ENCODE measurements at regions of chr2 and their contacts with region 1.

Region 1: DNA sequence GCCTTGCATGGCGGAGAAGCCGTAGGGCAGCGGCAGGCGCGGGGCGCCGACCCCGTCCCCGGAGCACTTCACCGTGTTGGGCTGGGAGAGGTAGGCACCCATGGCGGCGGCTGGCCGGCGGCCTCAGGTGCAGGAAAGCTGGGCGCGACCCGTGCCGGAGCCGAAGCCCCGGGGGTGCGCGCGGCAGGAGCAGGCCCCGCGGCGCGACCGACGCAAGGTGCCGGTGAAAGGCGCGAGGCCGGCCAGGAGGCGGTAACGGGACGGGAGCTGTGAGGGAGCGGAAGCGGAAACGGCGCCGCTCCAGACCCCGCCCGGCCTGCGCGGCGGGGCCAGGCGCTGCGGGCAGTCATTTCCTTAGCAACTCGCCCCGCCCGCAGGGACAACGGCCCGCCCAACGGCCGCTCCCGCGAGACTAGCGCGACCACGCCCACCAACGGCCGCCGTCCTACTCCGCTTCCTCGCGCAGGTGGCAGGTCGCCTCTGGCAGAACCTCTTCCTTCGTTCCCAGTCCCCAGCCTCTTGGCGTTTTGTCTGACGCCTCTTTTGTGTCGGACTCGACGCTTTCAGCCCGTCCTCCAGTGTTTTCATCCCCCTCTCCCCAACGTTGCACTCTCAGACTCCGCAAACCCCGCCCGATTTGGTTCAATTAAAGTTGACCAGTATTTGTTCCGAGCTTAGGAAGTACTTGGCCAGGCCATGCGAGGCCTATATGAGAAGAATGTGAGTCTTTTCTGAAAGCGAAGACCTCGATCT is at the start of gene PPM1G:
- DNase-seq: peak; percentile 96 to 99
- ATAC-seq: peak; percentile 99
- H3K4me3 ChIP-seq: peak within 1 kb of the TSS; percentile 48 to 86
- H3K27ac ChIP-seq: peak within 1 kb of the TSS in 1 of 2 donors; percentile 36
- H3K4me1 ChIP-seq: peaks cover 0 to 3% of the 10 kb centered on the region in 2 donors
- H3K27me3 ChIP-seq: no peaks in the 10 kb centered on the region
- total RNA-seq, gene PPM1G: 39.5 to 42.7 TPM

Region 2: GRCh38 chr2:27370026-27370815 is 39.3 kb before region 1 on chr2 and contains the starts of genes EIF2B4 and SNX17:
- intact Hi-C with region 1: loop called in 1 of 2 experiments (anchors 5 kb)
- DNase-seq: peak; percentile 100
- ATAC-seq: peak; percentile 99
- H3K4me3 ChIP-seq: peak within 1 kb of the TSS; percentile 69 to 82
- H3K27ac ChIP-seq: peak within 1 kb of the TSS in 1 of 2 donors; percentile 90
- H3K4me1 ChIP-seq: no peaks in the 10 kb centered on the region
- H3K27me3 ChIP-seq: no peaks in the 10 kb centered on the region
- total RNA-seq, gene EIF2B4: 32.2 to 42.7 TPM
- total RNA-seq, gene SNX17: 77.8 to 90.5 TPM

Region 3: DNA sequence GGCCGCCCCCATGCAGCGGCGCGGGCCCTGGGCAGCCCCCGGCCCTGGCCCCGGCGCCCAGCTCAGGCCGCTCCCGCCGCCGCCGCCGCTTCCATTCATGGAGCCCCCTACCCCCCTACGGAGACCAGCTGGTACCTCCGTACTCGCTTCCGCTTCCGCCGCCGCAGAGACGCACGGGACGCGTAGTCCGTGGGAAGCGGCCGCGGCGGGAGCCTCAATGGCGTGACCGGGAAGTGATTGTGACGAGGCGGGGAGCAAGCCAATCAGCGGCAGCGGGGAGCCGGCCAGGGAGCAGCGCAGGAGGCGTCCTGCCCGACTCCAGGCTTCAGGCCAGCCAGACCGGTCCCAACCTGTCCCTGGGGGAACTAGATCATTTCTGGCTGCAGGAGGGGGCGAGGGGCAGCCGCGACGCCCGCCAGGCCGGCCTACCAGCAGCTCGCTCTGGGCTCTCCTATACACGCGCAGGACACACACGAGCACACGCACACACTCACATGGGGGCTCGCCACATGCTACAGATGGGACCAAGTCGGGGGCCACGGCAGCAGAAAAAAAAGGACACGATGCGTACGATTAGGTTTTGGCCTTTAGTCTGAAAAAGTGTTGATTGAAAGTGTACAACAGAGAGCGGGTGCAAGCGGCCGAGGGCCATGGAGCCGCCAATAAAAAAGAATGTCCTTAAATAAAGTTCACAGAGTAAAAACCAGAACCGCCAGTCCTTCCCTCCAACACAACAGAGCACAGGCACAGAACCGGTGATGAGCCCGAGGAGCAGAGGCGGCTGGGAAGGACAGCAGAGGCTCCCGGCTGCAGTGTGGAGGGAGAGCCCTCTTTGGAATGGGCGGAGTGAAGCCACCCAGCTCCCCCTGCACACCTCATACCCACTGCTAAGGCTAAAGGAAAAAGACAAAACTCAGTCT is 28.6 kb before region 1 on chr2 and contains the start of gene ZNF513:
- intact Hi-C with region 1: loop called in 1 of 2 experiments (anchors 2 kb)
- DNase-seq: peak; percentile 98 to 99
- ATAC-seq: peak; percentile 94
- H3K4me3 ChIP-seq: peak within 1 kb of the TSS; percentile 77 to 88
- H3K27ac ChIP-seq: peak within 1 kb of the TSS; percentile 53 to 80
- H3K4me1 ChIP-seq: no peaks in the 10 kb centered on the region
- H3K27me3 ChIP-seq: no peaks in the 10 kb centered on the region
- total RNA-seq, gene ZNF513: 15.3 to 18.7 TPM

Region 4: GRCh38 chr2:27647289-27647688 is 237.8 kb after region 1 on chr2:
- intact Hi-C with region 1: no loop called
- DNase-seq: no peak
- ATAC-seq: no peak
- H3K4me3 ChIP-seq: no peak overlapping the region
- H3K27ac ChIP-seq: no peak overlapping the region
- H3K4me1 ChIP-seq: no peaks in the 10 kb centered on the region
- H3K27me3 ChIP-seq: no peaks in the 10 kb centered on the region